ENCODE measurements at regions of chr1 and their contacts with region 1.

Region 1: DNA sequence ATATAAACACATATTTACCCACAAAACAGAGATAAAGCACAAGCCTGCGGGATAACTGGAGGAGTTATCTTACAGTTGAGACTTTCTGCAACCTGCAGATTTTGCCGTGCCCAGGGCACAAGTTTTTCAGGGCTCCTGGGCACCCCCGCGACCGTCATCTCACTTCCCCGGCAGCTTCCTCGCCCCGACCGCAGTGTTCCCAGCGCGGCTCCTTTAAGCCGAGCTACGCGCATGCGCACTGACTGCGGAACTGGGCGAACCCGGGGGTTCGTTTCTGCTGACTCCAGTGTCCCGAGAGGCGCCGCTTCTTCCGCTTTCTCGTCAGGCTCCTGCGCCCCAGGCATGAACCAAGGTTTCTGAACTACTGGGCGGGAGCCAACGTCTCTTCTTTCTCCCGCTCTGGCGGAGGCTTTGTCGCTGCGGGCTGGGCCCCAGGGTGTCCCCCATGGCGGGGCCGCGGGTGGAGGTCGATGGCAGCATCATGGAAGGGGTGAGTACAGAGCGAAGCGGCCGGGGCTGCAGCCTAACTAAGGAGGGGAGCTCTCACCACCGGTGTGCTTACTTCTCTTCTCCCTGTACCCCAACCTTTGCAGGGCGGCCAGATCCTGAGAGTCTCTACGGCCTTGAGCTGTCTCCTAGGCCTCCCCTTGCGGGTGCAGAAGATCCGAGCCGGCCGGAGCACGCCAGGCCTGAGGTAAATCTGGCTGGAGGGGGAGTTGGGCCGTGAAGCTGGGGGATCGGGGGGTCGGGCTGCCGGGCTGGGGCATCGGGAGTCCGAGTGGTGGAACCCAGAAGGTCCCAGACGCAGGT is at the start of gene RTCA:
- DNase-seq: peak; percentile 91
- ATAC-seq: peak; percentile 95
- H3K4me3 Mint-ChIP-seq: peak within 1 kb of the TSS; percentile 100
- H3K27ac Mint-ChIP-seq: peak within 1 kb of the TSS; percentile 98
- H3K4me1 Mint-ChIP-seq: peaks cover 38% of the 10 kb centered on the region
- H3K27me3 Mint-ChIP-seq: no peaks in the 10 kb centered on the region
- CTCF ChIP-seq: no peak
- total RNA-seq, gene RTCA: 32.3 and 34.5 TPM in 2 replicates

Region 2: GRCh38 chr1:98870959-98871903 is 1394.9 kb before region 1 on chr1:
- CTCF ChIA-PET with region 1: no interaction called
- POLR2A ChIA-PET with region 1: no interaction called
- intact Hi-C with region 1: loop called (anchors 2 kb)
- DNase-seq: no peak
- ATAC-seq: peak; percentile 95
- H3K4me3 Mint-ChIP-seq: peak overlapping the region; percentile 74
- H3K27ac Mint-ChIP-seq: peak overlapping the region; percentile 89
- H3K4me1 Mint-ChIP-seq: peaks cover 22% of the 10 kb centered on the region
- H3K27me3 Mint-ChIP-seq: no peaks in the 10 kb centered on the region
- CTCF ChIP-seq: no peak

Region 3: GRCh38 chr1:99808391-99809115 is 457.6 kb before region 1 on chr1:
- CTCF ChIA-PET with region 1: no interaction called
- POLR2A ChIA-PET with region 1: no interaction called
- intact Hi-C with region 1: loop called (anchors 2 kb)
- DNase-seq: no peak
- ATAC-seq: peak; percentile 71
- H3K4me3 Mint-ChIP-seq: no peak overlapping the region
- H3K27ac Mint-ChIP-seq: no peak overlapping the region
- H3K4me1 Mint-ChIP-seq: peaks cover 4% of the 10 kb centered on the region
- H3K27me3 Mint-ChIP-seq: peaks cover 10% of the 10 kb centered on the region
- CTCF ChIP-seq: peak; percentile 52

Region 4: DNA sequence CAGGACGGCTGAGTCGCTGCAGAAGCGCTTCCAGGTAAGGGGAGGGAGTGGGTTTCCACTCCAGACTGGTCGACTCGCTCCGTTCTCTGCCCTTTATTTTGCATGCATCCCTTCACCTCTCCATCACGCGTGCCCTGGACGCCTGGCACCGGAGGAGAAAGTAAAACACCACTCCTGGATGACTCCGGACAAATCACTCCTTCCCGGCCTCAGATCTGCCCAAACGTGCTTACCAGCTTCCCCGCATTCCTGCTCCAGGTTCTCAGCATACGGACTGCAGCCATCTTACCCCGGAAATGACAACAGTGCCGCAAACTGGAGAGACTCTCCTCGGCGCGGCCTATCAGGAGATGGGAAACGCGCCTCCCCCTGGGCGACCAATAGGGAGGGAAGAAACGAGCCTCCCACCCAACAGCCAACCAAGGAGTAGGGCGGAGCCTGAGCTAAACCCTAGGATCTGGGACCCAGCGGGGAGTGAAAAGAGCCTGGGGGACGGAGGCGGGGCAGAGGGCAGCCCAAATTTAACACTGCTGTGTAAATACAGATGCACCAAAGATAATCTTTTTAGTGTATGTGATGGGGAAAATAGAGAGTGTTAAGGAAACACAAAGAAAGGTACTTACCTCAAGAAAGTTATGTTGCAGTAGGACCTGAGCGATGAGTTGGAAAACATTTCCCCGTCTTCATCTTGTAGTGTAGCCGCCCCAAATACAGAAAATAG is 16.4 kb before region 1 on chr1 and contains the start of gene DBT:
- CTCF ChIA-PET with region 1: interaction called, 3 read pairs
- POLR2A ChIA-PET with region 1: interaction called, 36 read pairs
- intact Hi-C with region 1: loop called (anchors 1 kb)
- DNase-seq: peak; percentile 77
- ATAC-seq: peak; percentile 100
- H3K4me3 Mint-ChIP-seq: no peak within 1 kb of the TSS
- H3K27ac Mint-ChIP-seq: no peak within 1 kb of the TSS
- H3K4me1 Mint-ChIP-seq: peaks cover 7% of the 10 kb centered on the region
- H3K27me3 Mint-ChIP-seq: no peaks in the 10 kb centered on the region
- CTCF ChIP-seq: no peak
- total RNA-seq, gene DBT: 9.8 and 11.6 TPM in 2 replicates

Region 5: GRCh38 chr1:100277866-100278265 is 11.7 kb after region 1 on chr1:
- CTCF ChIA-PET with region 1: no interaction called
- POLR2A ChIA-PET with region 1: interaction called, 3 read pairs
- intact Hi-C with region 1: loop called (anchors 1 kb)
- DNase-seq: no peak
- ATAC-seq: peak; percentile 49
- H3K4me3 Mint-ChIP-seq: no peak overlapping the region
- H3K27ac Mint-ChIP-seq: no peak overlapping the region
- H3K4me1 Mint-ChIP-seq: peaks cover 2% of the 10 kb centered on the region
- H3K27me3 Mint-ChIP-seq: no peaks in the 10 kb centered on the region
- CTCF ChIP-seq: no peak

Region 6: DNA sequence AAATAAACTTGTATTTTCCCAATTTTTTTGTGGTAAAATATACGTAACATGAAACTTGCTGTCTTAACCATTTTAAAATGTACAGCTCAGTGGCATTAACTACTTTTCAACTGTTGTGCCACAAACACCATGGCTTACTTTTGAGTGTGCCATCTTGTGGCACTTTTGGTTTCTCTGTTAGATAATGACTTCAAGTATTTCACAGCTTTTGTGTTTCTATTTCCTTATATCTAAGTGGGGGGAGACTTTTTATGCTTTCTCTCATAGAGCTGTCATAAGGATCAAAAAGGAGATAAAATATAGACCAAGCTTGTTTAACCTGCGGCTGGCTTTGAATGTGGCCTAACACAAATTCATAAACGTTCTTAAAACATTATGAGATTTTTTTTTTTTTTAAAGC is 130.5 kb after region 1 on chr1:
- CTCF ChIA-PET with region 1: no interaction called
- POLR2A ChIA-PET with region 1: no interaction called
- intact Hi-C with region 1: no loop called
- DNase-seq: no peak
- ATAC-seq: no peak
- H3K4me3 Mint-ChIP-seq: no peak overlapping the region
- H3K27ac Mint-ChIP-seq: no peak overlapping the region
- H3K4me1 Mint-ChIP-seq: peaks cover 74% of the 10 kb centered on the region
- H3K27me3 Mint-ChIP-seq: no peaks in the 10 kb centered on the region
- CTCF ChIP-seq: no peak